ENCODE measurements at regions of chr4 and their contacts with region 1.

Region 1: DNA sequence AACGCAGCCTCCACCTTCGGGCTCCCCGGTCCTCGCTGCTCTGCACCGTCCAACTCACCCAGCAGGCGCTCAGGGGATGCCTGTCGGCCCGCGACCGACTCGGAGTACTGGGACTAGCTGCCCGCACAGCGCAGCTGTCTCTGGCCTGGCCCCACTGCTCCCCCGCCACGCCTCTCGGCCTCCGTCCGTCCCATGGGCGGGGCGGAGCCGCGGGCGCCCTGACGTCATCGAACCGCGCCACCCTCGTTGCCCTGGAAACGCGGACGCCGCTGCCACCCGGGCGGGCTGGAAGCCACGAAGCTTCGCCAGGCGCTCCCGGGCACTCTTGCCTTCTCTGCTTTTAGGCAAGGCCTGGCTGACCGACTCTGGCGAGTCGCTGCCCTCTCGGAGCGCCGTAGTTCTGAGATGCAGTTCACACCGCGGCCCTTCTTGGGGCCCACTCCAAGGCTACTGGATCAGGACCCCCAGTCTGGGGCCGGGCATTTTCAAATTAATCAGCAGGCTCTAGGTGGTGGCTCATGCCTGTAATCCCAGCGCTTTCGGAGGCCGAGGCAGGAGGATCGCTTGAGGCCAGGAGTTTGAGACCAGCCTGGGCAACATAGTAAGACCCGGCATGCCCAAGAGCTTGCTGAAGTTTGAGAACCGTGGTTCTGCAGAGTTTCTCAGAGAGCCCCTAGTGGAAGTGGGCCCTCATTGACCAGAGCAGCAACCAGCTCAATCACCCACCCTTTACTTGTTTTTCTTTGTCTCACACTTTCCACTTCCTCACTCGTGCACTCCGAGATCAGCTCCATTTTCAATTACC is 12.0 kb downstream of the ACOX3 start:
- DNase-seq: peak; percentile 47 to 95
- H3K4me3 ChIP-seq: peak overlapping the region; percentile 88 to 89
- H3K27ac ChIP-seq: peak overlapping the region; percentile 86 to 93
- H3K4me1 ChIP-seq: peaks cover 8 to 22% of the 10 kb centered on the region in 2 donors
- H3K27me3 ChIP-seq: no peaks in the 10 kb centered on the region
- CTCF ChIP-seq: peak in 1 of 3 experiments; percentile 13

Region 2: GRCh38 chr4:8158710-8159536 is 269.6 kb before region 1 on chr4 and contains the start of gene ABLIM2:
- intact Hi-C with region 1: loop called (anchors 5 kb)
- DNase-seq: peak; percentile 92 to 99
- H3K4me3 ChIP-seq: peak within 1 kb of the TSS; percentile 86 to 94
- H3K27ac ChIP-seq: peak within 1 kb of the TSS; percentile 36 to 50
- H3K4me1 ChIP-seq: peaks cover 13 to 25% of the 10 kb centered on the region in 2 donors
- H3K27me3 ChIP-seq: no peaks in the 10 kb centered on the region
- CTCF ChIP-seq: no peak
- total RNA-seq, gene ABLIM2: 30.8 TPM

Region 3: GRCh38 chr4:8241895-8242696 is 186.4 kb before region 1 on chr4:
- intact Hi-C with region 1: loop called (anchors 1 kb)
- DNase-seq: peak; percentile 49 to 91
- H3K4me3 ChIP-seq: no peak overlapping the region
- H3K27ac ChIP-seq: peak overlapping the region in 1 of 2 donors; percentile 7
- H3K4me1 ChIP-seq: peaks cover 0 to 5% of the 10 kb centered on the region in 2 donors
- H3K27me3 ChIP-seq: no peaks in the 10 kb centered on the region
- CTCF ChIP-seq: peak; percentile 93 to 98 (median 96)

Region 4: DNA sequence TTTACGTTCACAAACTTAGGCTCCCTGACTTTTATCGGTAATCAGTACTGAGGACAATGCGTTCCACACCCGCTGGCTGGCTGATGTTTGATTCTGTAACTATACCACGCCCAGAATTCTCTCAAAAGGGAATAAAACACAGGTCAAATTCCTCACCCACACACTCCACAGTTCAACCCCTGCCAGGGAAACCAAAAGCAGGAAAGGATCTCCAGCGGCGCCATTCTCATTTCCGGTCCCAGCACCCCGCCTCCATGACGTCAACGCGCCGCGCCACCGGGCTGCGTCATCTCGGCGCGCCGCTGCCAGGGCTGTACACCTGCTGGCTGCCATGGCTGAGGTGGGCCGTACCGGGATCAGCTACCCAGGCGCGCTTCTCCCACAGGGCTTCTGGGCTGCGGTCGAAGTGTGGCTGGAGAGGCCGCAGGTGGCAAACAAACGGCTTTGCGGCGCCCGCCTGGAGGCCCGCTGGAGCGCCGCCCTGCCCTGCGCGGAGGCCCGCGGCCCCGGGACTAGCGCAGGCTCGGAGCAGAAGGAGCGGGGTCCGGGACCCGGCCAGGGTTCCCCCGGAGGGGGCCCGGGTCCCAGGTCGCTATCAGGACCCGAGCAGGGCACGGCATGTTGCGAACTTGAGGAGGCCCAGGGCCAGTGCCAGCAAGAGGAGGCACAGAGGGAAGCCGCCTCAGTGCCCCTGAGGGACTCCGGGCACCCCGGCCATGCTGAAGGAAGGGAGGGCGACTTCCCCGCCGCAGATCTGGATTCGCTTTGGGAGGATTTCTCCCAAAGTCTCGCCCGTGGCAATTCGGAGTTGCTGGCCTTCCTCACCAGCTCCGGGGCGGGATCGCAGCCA is 12.2 kb after region 1 on chr4 and contains the starts of genes ACOX3 and TRMT44:
- intact Hi-C with region 1: loop called (anchors 1 kb)
- DNase-seq: peak; percentile 79 to 97
- H3K4me3 ChIP-seq: peak within 1 kb of the TSS; percentile 89 to 93
- H3K27ac ChIP-seq: peak within 1 kb of the TSS; percentile 95 to 97
- H3K4me1 ChIP-seq: peaks cover 7 to 31% of the 10 kb centered on the region in 2 donors
- H3K27me3 ChIP-seq: no peaks in the 10 kb centered on the region
- CTCF ChIP-seq: no peak
- total RNA-seq, gene ACOX3: 74.5 TPM
- total RNA-seq, gene TRMT44: 39.8 TPM

Measured in ascending aorta (tissue), 2 donors.